HCT116 (cell line): ENCODE measurements at regions of chr17 and their contacts with region 1.

Region 1: DNA sequence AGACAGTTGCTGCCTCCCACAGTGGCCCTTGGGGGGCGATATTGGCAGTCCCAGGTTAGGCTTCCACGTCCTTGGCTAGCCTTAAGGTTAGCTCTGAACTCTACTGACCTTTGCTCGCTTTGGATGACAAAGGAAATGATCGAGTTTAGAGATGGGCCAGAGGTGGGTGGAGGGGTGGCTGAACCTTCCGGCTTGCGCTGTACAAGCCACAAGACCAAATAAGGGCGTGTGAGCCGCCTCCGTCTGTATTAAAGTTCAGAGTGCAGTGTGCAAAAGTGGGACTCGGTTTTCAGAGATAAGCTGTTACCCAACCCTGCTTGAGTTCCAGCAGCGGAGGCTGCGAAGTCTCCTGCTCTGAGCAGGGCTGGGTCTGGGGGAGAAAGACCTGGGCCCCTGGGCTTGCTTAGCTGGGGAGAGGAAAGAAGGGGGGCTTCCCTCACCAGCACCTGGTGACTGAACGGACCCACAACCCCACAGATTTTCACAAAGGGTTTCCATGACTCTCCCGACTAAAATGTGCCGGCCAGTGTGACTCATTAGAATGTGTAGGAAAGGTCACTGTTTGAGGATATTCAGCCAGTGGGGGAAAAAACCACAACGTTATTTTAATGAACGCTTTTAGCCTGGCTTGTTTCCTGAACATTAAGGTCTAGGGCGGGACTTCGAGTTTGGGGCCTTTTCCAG is 67.2 kb downstream of the CENPV start:
- DNase-seq: peak; percentile 95
- ATAC-seq: peak; percentile 84
- H3K4me3 ChIP-seq: peak overlapping the region; percentile 37 to 57
- H3K27ac ChIP-seq: peak overlapping the region; percentile 97
- H3K4me1 ChIP-seq: peaks cover 76 to 77% of the 10 kb centered on the region in 2 experiments
- H3K27me3 ChIP-seq: no peaks in the 10 kb centered on the region
- CTCF ChIP-seq: peak; percentile 23 to 70 (median 67); a peak in 5 of 6 replicates
- POLR2A ChIP-seq: peak; percentile 55
- RAD21 ChIP-seq: peak; percentile 68

Region 2: DNA sequence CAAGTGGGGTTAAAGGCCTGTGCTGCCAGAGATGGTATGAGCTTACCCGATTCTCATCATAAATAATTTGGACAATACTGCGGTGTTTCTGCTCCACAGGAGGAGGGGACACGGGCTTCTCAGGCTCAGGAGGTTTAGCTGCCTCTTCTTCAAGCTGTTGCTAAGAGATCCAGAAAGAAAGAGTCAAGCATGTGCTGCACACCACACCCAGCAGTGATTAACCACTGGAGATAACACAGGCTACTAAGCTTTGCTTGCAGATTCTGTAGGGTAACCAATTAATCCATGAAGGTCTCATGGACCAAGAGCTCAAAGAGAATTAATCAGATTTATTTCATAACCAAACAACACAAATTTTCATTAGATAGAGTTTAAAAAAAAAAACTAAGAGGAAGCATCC is 127.4 kb before region 1 on chr17:
- CTCF ChIA-PET with region 1: no interaction called
- POLR2A ChIA-PET with region 1: no interaction called
- RAD21 ChIA-PET with region 1: no interaction called
- intact Hi-C with region 1: no loop called
- DNase-seq: no peak
- ATAC-seq: no peak
- H3K4me3 ChIP-seq: no peak overlapping the region
- H3K27ac ChIP-seq: no peak overlapping the region
- H3K4me1 ChIP-seq: no peaks in the 10 kb centered on the region
- H3K27me3 ChIP-seq: no peaks in the 10 kb centered on the region
- CTCF ChIP-seq: no peak
- POLR2A ChIP-seq: no peak
- RAD21 ChIP-seq: no peak

Region 3: GRCh38 chr17:16215273-16215964 is 70.7 kb before region 1 on chr17 and contains the start of gene NCOR1:
- CTCF ChIA-PET with region 1: interaction called, 3 read pairs
- POLR2A ChIA-PET with region 1: interaction called, 12 read pairs
- RAD21 ChIA-PET with region 1: interaction called in 1 of 2 experiments, 8 read pairs
- intact Hi-C with region 1: loop called (anchors 2 kb)
- DNase-seq: peak; percentile 82
- ATAC-seq: peak; percentile 87
- H3K4me3 ChIP-seq: peak within 1 kb of the TSS; percentile 78 to 87
- H3K27ac ChIP-seq: peak within 1 kb of the TSS; percentile 94
- H3K4me1 ChIP-seq: peaks cover 13 to 37% of the 10 kb centered on the region in 2 experiments; a peak in 3 of 4 replicates
- H3K27me3 ChIP-seq: no peaks in the 10 kb centered on the region
- CTCF ChIP-seq: peak in 1 of 3 experiments; percentile 21; a peak in 2 of 6 replicates
- POLR2A ChIP-seq: peak; percentile 91
- RAD21 ChIP-seq: peak; percentile 52
- total RNA-seq, gene NCOR1: 43.7 TPM

Region 4: GRCh38 chr17:16273499-16273898 is 12.6 kb before region 1 on chr17:
- CTCF ChIA-PET with region 1: interaction called, 7 read pairs
- POLR2A ChIA-PET with region 1: interaction called, 18 read pairs
- RAD21 ChIA-PET with region 1: no interaction called
- intact Hi-C with region 1: no loop called
- DNase-seq: peak; percentile 61
- ATAC-seq: peak; percentile 74
- H3K4me3 ChIP-seq: no peak overlapping the region
- H3K27ac ChIP-seq: peak overlapping the region; percentile 41; the same call in 1 of the 2 replicates
- H3K4me1 ChIP-seq: peaks cover 13 to 33% of the 10 kb centered on the region in 2 experiments
- H3K27me3 ChIP-seq: no peaks in the 10 kb centered on the region
- CTCF ChIP-seq: no peak
- POLR2A ChIP-seq: no peak
- RAD21 ChIP-seq: no peak; the same call in 1 of the 2 replicates

Region 5: GRCh38 chr17:16322636-16323035 is 36.5 kb after region 1 on chr17:
- CTCF ChIA-PET with region 1: no interaction called
- POLR2A ChIA-PET with region 1: no interaction called
- RAD21 ChIA-PET with region 1: no interaction called
- intact Hi-C with region 1: no loop called
- DNase-seq: no peak
- ATAC-seq: no peak
- H3K4me3 ChIP-seq: no peak overlapping the region
- H3K27ac ChIP-seq: no peak overlapping the region
- H3K4me1 ChIP-seq: no peaks in the 10 kb centered on the region
- H3K27me3 ChIP-seq: no peaks in the 10 kb centered on the region
- CTCF ChIP-seq: no peak
- POLR2A ChIP-seq: no peak
- RAD21 ChIP-seq: no peak

Region 6: DNA sequence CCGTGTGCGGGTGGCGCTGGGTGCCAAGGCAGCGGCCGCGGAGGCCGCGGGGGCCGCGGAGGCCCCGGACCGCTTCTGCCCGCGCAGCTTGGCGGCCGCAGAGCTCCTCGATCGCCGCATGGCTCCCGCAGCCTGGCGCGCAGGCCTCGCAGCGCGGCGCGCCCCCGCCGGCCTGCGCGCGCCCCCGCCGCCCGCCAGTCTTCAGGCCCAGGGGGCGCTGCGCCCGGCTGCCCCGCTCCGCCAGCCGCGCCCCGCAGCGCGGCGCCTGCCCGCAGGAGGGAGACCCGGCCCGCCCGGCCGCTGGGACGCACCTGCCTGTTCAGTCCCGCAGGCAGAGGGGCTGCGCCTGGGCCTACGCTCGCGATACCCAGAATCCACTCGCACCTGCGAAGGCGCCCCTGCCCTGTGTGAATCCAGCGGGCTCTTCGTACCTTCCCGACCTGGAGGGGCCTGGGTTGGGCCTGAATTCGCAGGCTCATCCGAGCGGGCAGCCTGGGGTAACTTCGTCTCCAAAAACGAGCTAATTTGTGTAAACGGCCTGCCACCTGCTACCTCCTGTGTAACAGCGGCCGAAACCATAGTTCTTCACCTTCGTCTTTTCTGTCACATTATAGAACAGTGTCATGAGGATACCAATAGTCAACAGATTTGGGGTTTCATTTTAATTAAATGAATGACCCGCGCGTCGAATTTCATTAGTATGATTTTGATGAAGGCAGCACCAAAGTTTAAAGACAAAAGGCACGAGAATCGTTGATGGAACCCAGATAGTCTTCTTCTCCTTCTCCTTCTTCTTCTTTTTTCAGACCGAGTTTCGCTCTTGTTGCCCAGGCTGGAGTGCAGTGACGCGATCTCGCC is 67.4 kb after region 1 on chr17 and contains the start of gene CENPV:
- CTCF ChIA-PET with region 1: no interaction called
- POLR2A ChIA-PET with region 1: no interaction called
- RAD21 ChIA-PET with region 1: interaction called in 1 of 2 experiments, 4 read pairs
- intact Hi-C with region 1: loop called (anchors 5 kb)
- DNase-seq: peak; percentile 41
- ATAC-seq: peak; percentile 87
- H3K4me3 ChIP-seq: peak within 1 kb of the TSS; percentile 83 to 92
- H3K27ac ChIP-seq: peak within 1 kb of the TSS; percentile 89
- H3K4me1 ChIP-seq: peaks cover 11 to 18% of the 10 kb centered on the region in 2 experiments
- H3K27me3 ChIP-seq: no peaks in the 10 kb centered on the region
- CTCF ChIP-seq: no peak
- POLR2A ChIP-seq: peak; percentile 70
- RAD21 ChIP-seq: no peak
- total RNA-seq, gene CENPV: 84.7 TPM